Activated B cell treated with CpG ODN at 0.5 μM for 24 hours (primary cell): ENCODE measurements at regions of chr19 and their contacts with region 1.

Region 1: GRCh38 chr19:2475702-2476450 is at the start of gene GADD45B:
- DNase-seq: peak; percentile 96
- ATAC-seq: peak; percentile 59
- H3K4me3 Mint-ChIP-seq: peak within 1 kb of the TSS; percentile 99
- H3K27ac Mint-ChIP-seq: peak within 1 kb of the TSS; percentile 93
- H3K4me1 Mint-ChIP-seq: peaks cover 32% of the 10 kb centered on the region
- H3K27me3 Mint-ChIP-seq: no peaks in the 10 kb centered on the region
- CTCF ChIP-seq: no peak
- total RNA-seq, gene GADD45B: 291 and 302 TPM in 2 replicates

Region 2: DNA sequence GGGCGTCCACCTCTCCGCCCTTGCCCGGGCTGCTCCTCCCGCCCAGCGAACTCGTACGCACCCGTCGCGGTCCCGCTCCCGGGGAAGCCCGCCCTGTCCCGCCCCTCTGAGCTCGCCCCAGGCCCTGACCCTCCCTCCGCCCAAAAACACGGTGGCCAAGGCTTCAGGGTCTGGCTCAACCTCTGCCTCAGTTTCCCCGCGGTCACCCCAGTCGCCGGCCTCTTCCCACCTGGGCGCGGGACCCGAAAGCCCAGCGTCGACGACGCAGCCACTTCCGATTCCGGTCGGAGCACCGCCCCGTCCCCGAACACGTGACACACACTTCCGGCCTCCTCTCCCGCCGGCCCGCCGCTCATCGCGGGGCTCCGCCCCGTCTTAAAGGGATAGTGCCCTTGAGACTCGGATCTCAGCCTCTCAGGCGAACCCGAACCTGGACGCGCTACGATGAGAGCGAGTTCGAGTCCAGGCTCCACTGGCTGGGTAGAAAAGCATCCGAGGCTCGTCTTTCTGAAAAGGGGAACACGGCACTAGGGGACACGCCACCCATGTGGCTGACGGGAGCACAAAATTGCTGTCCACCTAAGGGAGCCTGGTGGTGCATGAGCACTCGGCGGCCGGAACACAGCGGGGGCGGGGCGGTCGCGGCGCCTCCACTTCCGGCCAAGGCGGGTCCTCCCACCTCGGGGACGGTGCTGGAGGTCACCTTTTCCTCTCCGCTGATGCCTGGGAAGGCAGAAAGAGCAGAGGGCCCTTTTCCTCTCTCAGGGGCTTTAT is 996.8 kb before region 1 on chr19 and contains the start of gene C19orf25:
- CTCF ChIA-PET with region 1: no interaction called
- POLR2A ChIA-PET with region 1: no interaction called
- intact Hi-C with region 1: no loop called
- DNase-seq: peak; percentile 89
- ATAC-seq: peak; percentile 93
- H3K4me3 Mint-ChIP-seq: peak within 1 kb of the TSS; percentile 98
- H3K27ac Mint-ChIP-seq: peak within 1 kb of the TSS; percentile 95
- H3K4me1 Mint-ChIP-seq: peaks cover 18% of the 10 kb centered on the region
- H3K27me3 Mint-ChIP-seq: no peaks in the 10 kb centered on the region
- CTCF ChIP-seq: no peak
- total RNA-seq, gene C19orf25: 42.8 and 55.7 TPM in 2 replicates

Region 3: DNA sequence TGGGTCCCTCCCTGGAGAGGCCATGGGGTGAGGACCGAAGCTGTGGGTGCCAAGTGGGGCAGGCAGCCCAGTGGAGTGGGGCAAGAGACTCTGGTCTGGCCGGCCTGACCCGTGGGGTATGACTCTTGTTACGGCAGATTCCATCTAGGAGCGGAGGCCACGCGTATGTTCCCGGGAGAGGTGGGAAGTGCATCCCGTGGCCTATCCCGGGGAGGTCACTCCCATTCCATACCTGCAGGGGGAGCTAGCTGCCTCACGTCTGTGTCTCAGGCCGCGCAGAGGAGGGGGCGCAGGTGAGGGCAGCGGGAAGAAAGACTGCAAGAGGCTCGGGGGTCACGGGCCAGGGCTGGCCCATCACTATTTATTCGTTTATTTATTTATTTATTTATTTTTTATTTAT is 530.0 kb before region 1 on chr19:
- CTCF ChIA-PET with region 1: no interaction called
- POLR2A ChIA-PET with region 1: no interaction called
- intact Hi-C with region 1: no loop called
- DNase-seq: no peak
- ATAC-seq: no peak
- H3K4me3 Mint-ChIP-seq: peak overlapping the region; percentile 19
- H3K27ac Mint-ChIP-seq: peak overlapping the region; percentile 53
- H3K4me1 Mint-ChIP-seq: peaks cover 49% of the 10 kb centered on the region
- H3K27me3 Mint-ChIP-seq: no peaks in the 10 kb centered on the region
- CTCF ChIP-seq: no peak

Region 4: DNA sequence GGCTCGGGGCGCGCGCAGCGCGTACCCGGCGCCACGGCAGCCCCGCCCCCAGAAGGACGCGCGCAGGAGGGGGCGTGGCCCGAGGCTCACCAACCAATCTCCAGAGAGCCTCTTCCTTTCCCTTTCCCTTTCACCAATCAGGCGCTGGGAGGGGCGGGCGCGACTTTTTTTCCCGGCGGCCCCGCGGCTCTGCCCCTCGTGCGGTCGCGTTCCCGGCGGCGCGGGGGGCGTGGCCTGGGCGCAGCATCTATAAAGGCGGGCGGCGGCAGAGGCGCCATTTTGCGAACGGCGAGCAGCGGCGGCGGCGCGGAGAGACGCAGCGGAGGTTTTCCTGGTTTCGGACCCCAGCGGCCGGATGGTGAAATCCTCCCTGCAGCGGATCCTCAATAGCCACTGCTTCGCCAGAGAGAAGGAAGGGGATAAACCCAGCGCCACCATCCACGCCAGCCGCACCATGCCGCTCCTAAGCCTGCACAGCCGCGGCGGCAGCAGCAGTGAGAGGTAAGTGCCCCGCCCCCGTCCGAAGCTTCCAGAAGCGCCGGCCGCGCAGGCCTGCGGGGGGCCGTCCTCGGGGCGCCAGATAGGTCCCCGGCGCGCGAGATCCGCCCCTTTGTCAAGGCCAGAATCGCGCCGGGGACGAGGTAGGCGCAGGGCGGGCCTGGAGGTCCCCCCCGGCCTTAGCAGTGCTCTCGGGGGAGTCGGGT is 206.5 kb before region 1 on chr19:
- CTCF ChIA-PET with region 1: no interaction called
- POLR2A ChIA-PET with region 1: interaction called, 11 read pairs
- intact Hi-C with region 1: loop called (anchors 5 kb)
- DNase-seq: peak; percentile 100
- ATAC-seq: peak; percentile 67
- H3K4me3 Mint-ChIP-seq: peak overlapping the region; percentile 92
- H3K27ac Mint-ChIP-seq: peak overlapping the region; percentile 91
- H3K4me1 Mint-ChIP-seq: peaks cover 60% of the 10 kb centered on the region
- H3K27me3 Mint-ChIP-seq: no peaks in the 10 kb centered on the region
- CTCF ChIP-seq: no peak

Region 5: GRCh38 chr19:2345794-2346663 is 129.8 kb before region 1 on chr19:
- CTCF ChIA-PET with region 1: no interaction called
- POLR2A ChIA-PET with region 1: no interaction called
- intact Hi-C with region 1: no loop called
- DNase-seq: no peak
- ATAC-seq: no peak
- H3K4me3 Mint-ChIP-seq: no peak overlapping the region
- H3K27ac Mint-ChIP-seq: no peak overlapping the region
- H3K4me1 Mint-ChIP-seq: no peaks in the 10 kb centered on the region
- H3K27me3 Mint-ChIP-seq: no peaks in the 10 kb centered on the region
- CTCF ChIP-seq: no peak

Region 6: DNA sequence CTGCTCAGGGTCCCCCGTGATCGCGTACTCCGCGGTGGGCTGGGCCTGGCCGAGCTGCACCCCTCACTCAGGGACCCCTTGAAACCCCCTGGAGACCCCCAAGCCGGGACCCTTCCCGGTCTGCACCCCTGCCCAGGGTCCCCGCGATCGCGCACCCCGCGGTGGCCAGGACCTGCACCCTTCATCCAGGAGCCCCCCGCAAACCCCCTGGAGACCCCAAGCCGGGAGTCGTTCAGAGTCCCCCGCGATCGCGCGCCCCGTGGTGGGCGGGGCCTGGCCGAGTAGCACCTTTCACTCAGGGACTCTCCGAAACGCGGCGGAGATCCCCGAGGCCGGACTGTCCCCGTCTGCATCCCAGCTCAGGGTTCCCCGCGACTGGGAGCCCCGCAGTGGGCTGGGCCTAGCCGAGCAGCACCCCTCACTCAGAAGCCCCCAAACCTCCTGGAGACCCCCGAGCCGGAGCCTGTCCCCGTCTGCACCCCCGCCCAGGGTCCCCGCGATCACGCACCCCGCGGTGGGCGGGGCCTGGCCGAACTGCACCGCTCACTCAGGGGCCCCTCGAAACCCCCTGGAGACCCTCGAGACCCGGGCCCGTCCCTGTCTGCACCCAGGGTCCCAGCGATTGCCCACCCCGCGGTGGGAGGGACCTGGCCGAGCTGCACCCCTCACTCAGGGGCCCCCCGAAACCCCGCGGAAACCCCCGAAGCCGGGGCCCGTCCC is 19.9 kb before region 1 on chr19:
- CTCF ChIA-PET with region 1: no interaction called
- POLR2A ChIA-PET with region 1: interaction called, 23 read pairs
- intact Hi-C with region 1: no loop called
- DNase-seq: peak; percentile 51
- ATAC-seq: peak; percentile 53
- H3K4me3 Mint-ChIP-seq: peak overlapping the region; percentile 89
- H3K27ac Mint-ChIP-seq: peak overlapping the region; percentile 85
- H3K4me1 Mint-ChIP-seq: peaks cover 30% of the 10 kb centered on the region
- H3K27me3 Mint-ChIP-seq: no peaks in the 10 kb centered on the region
- CTCF ChIP-seq: no peak

Region 7: GRCh38 chr19:2523630-2524311 is 47.9 kb after region 1 on chr19:
- CTCF ChIA-PET with region 1: no interaction called
- POLR2A ChIA-PET with region 1: interaction called, 10 read pairs
- intact Hi-C with region 1: no loop called
- DNase-seq: no peak
- ATAC-seq: no peak
- H3K4me3 Mint-ChIP-seq: no peak overlapping the region
- H3K27ac Mint-ChIP-seq: no peak overlapping the region
- H3K4me1 Mint-ChIP-seq: peaks cover 11% of the 10 kb centered on the region
- H3K27me3 Mint-ChIP-seq: no peaks in the 10 kb centered on the region
- CTCF ChIP-seq: no peak

Region 8: DNA sequence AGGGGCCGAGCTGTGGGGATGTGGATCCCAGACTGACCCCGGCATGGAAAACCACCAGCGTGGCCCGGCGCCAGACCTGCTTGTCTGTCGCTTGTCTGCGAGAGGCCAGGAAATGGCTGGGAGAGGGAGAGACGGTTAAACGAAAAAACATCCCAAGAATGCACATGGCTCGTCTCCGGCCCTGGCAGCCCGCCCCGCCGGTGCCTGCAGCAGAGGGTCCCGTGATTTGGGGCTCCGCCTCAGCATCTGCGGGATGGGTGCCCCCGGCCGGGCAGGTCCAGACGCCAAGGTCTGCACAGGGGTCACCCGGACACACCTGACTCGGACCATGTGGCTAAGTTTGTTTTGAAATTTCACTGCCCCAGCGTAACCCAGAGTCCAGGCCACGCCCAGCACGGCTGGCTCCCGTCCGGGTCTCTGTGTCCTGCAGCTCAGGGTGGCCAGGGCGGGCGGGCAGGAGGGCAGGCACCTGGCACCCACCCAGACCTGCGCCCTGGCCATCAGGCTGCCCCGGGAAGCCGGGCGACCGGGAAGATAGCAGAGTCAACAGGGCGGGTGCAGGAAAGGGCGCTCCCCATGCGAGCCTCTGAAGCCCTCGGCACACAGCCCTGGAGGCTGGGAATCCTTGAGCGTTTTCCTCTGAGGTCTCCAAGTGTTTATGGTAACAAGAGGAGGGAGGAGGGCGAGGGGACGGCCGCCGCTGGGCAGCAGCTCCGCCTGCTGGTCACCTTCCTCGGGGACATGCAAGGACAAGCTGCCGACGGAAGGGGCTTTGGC is 103.2 kb after region 1 on chr19:
- CTCF ChIA-PET with region 1: interaction called, 7 read pairs
- POLR2A ChIA-PET with region 1: interaction called, 62 read pairs
- intact Hi-C with region 1: loop called (anchors 1 kb)
- DNase-seq: peak; percentile 45
- ATAC-seq: peak; percentile 66
- H3K4me3 Mint-ChIP-seq: peak overlapping the region; percentile 7
- H3K27ac Mint-ChIP-seq: no peak overlapping the region
- H3K4me1 Mint-ChIP-seq: peaks cover 14% of the 10 kb centered on the region
- H3K27me3 Mint-ChIP-seq: no peaks in the 10 kb centered on the region
- CTCF ChIP-seq: no peak

Region 9: DNA sequence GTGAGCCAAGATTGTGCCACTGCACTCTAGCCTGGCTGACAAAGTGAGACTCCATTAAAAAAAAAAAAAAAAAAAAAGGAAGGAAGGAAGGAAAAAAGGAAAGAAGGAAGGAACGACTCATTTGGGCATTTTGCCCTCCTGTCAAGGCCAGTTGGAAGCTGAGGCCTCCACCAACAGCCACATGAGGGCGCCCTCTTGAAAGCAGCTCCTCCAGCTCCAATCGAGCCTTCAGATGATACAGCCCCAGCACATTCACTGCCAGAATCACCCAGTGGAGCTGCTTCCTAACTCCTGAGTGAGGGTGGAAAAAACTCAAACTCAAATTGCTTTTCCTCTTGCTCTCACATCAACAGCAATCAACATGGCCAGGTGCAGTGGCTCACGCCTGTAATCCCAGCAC is 185.7 kb after region 1 on chr19:
- CTCF ChIA-PET with region 1: no interaction called
- POLR2A ChIA-PET with region 1: no interaction called
- intact Hi-C with region 1: no loop called
- DNase-seq: no peak
- ATAC-seq: no peak
- H3K4me3 Mint-ChIP-seq: no peak overlapping the region
- H3K27ac Mint-ChIP-seq: peak overlapping the region; percentile 24
- H3K4me1 Mint-ChIP-seq: peaks cover 40% of the 10 kb centered on the region
- H3K27me3 Mint-ChIP-seq: no peaks in the 10 kb centered on the region
- CTCF ChIP-seq: no peak

Region 10: DNA sequence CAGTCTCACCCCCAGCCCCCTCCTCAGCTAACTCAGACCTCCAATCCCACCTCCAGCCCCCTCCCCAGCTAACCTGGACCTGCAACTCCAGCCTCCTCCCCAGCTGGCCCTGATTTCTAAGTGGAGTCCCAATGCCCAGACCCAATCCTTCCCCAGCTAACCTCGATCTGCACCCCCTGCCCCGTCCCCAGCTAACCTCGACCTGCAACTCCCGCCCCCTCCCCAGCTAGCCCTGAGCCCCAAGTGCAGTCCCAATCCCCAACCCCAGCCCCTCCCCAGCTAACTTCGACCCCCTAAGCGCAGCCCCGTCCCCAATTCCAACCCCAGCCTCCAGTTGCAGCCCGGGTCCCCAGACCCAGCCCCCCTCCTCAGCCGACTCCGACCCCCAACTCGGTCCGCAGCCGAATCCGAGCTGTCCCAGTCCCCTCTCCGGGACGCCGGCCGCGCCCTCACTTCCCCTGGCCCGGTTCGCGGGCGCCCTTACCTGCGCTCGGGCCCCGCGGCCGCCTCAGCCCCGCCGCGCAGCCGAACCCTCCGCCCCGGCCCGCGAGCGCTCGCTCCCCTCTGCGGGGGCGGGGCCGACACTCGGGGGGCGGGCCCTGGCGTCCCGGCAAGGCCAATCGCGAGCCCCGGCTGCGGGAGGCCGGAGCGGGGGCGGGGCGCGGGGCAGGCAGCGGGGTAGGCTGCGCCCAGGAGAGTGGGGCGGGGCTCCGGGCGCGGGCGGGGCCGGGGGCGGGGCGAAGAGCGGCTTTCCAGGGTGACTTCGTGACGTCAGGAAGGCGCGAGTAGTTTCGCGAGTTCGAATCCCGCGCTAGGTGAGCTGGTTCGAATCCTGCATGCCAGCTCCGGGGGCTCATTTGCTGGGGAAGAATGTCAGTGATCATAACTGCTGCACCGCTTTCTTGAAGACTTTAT is 226.5 kb after region 1 on chr19 and contains the start of gene GNG7:
- CTCF ChIA-PET with region 1: no interaction called
- POLR2A ChIA-PET with region 1: interaction called, 23 read pairs
- intact Hi-C with region 1: no loop called
- DNase-seq: peak; percentile 99
- ATAC-seq: peak; percentile 99
- H3K4me3 Mint-ChIP-seq: peak within 1 kb of the TSS; percentile 85
- H3K27ac Mint-ChIP-seq: peak within 1 kb of the TSS; percentile 89
- H3K4me1 Mint-ChIP-seq: peaks cover 53% of the 10 kb centered on the region
- H3K27me3 Mint-ChIP-seq: no peaks in the 10 kb centered on the region
- CTCF ChIP-seq: no peak
- total RNA-seq, gene GNG7: 34.8 and 35.4 TPM in 2 replicates